Endothelial cell of umbilical vein (primary cell): ENCODE measurements at regions of chr12 and their contacts with region 1.

Region 1: GRCh38 chr12:46983393-46984266 is 95.8 kb upstream of the PCED1B start:
- DNase-seq: peak; percentile 71
- H3K4me3 ChIP-seq: no peak overlapping the region
- H3K27ac ChIP-seq: no peak overlapping the region
- H3K4me1 ChIP-seq: no peaks in the 10 kb centered on the region
- H3K27me3 ChIP-seq: peaks cover 0 to 8% of the 10 kb centered on the region in 2 experiments
- CTCF ChIP-seq: peak; percentile 75 to 76
- POLR2A ChIP-seq: no peak

Region 2: GRCh38 chr12:46342562-46343033 is 641.0 kb before region 1 on chr12:
- CTCF ChIA-PET with region 1: interaction called, 14 read pairs
- POLR2A ChIA-PET with region 1: no interaction called
- dilution Hi-C with region 1: no loop called
- intact Hi-C with region 1: loop called (anchors 1 kb)
- DNase-seq: peak; percentile 66
- H3K4me3 ChIP-seq: no peak overlapping the region
- H3K27ac ChIP-seq: no peak overlapping the region
- H3K4me1 ChIP-seq: no peaks in the 10 kb centered on the region
- H3K27me3 ChIP-seq: no peaks in the 10 kb centered on the region
- CTCF ChIP-seq: peak; percentile 49
- POLR2A ChIP-seq: no peak

Region 3: DNA sequence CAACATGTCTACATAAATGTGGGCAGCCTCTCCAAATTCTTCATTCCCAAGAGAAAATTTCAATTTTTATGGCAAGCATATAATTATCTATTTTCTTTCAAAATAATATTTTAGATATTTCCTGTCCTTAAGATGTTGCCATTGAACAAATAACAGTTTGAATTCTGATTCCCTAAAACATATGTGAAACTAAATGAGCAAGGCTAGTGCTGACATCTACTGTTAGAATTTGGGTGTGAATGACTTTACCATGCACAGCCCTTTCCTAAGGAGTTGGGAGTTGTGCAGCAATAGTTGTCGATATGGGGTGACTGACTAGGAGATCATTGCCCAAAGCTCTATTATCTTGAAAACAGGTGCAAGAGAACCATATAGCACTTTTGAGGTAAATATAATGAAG is 49.7 kb before region 1 on chr12:
- CTCF ChIA-PET with region 1: interaction called, 13 read pairs
- POLR2A ChIA-PET with region 1: no interaction called
- dilution Hi-C with region 1: no loop called
- intact Hi-C with region 1: no loop called
- DNase-seq: peak; percentile 71
- H3K4me3 ChIP-seq: no peak overlapping the region
- H3K27ac ChIP-seq: no peak overlapping the region
- H3K4me1 ChIP-seq: no peaks in the 10 kb centered on the region
- H3K27me3 ChIP-seq: peaks cover 0 to 2% of the 10 kb centered on the region in 2 experiments
- CTCF ChIP-seq: peak in 1 of 2 donors; percentile 34
- POLR2A ChIP-seq: no peak

Region 4: GRCh38 chr12:46963977-46964971 is 19.4 kb before region 1 on chr12:
- CTCF ChIA-PET with region 1: interaction called, 11 read pairs
- POLR2A ChIA-PET with region 1: no interaction called
- dilution Hi-C with region 1: no loop called
- intact Hi-C with region 1: no loop called
- DNase-seq: peak; percentile 53
- H3K4me3 ChIP-seq: peak overlapping the region in 1 of 3 experiments; percentile 1
- H3K27ac ChIP-seq: peak overlapping the region; percentile 34
- H3K4me1 ChIP-seq: peaks cover 14% of the 10 kb centered on the region
- H3K27me3 ChIP-seq: no peaks in the 10 kb centered on the region
- CTCF ChIP-seq: no peak
- POLR2A ChIP-seq: no peak

Region 5: GRCh38 chr12:47014474-47014873 is 30.8 kb after region 1 on chr12:
- CTCF ChIA-PET with region 1: interaction called, 43 read pairs
- POLR2A ChIA-PET with region 1: no interaction called
- dilution Hi-C with region 1: no loop called
- intact Hi-C with region 1: no loop called
- DNase-seq: peak; percentile 89
- H3K4me3 ChIP-seq: no peak overlapping the region
- H3K27ac ChIP-seq: peak overlapping the region; percentile 42
- H3K4me1 ChIP-seq: peaks cover 11% of the 10 kb centered on the region
- H3K27me3 ChIP-seq: peaks cover 0 to 2% of the 10 kb centered on the region in 2 experiments
- CTCF ChIP-seq: no peak
- POLR2A ChIP-seq: no peak